Mammary epithelial cell (primary cell): ENCODE measurements at regions of chr12 and their contacts with region 1.

Region 1: GRCh38 chr12:65823513-65824375 is 539 bp upstream of the HMGA2 start:
- DNase-seq: peak; percentile 81
- H3K4me3 ChIP-seq: peak overlapping the region; percentile 70 to 85 (median 80)
- H3K27ac ChIP-seq: peak overlapping the region; percentile 97
- H3K4me1 ChIP-seq: peaks cover 32% of the 10 kb centered on the region
- H3K27me3 ChIP-seq: no peaks in the 10 kb centered on the region
- CTCF ChIP-seq: no peak

Region 2: GRCh38 chr12:65313719-65314317 is 509.9 kb before region 1 on chr12:
- CTCF ChIA-PET with region 1: no interaction called
- dilution Hi-C with region 1: no loop called
- in situ Hi-C with region 1: no loop called
- intact Hi-C with region 1: loop called (anchors 1 kb)
- DNase-seq: peak; percentile 19
- H3K4me3 ChIP-seq: no peak overlapping the region
- H3K27ac ChIP-seq: peak overlapping the region; percentile 2
- H3K4me1 ChIP-seq: peaks cover 3% of the 10 kb centered on the region
- H3K27me3 ChIP-seq: no peaks in the 10 kb centered on the region
- CTCF ChIP-seq: peak; percentile 59 to 67

Region 3: DNA sequence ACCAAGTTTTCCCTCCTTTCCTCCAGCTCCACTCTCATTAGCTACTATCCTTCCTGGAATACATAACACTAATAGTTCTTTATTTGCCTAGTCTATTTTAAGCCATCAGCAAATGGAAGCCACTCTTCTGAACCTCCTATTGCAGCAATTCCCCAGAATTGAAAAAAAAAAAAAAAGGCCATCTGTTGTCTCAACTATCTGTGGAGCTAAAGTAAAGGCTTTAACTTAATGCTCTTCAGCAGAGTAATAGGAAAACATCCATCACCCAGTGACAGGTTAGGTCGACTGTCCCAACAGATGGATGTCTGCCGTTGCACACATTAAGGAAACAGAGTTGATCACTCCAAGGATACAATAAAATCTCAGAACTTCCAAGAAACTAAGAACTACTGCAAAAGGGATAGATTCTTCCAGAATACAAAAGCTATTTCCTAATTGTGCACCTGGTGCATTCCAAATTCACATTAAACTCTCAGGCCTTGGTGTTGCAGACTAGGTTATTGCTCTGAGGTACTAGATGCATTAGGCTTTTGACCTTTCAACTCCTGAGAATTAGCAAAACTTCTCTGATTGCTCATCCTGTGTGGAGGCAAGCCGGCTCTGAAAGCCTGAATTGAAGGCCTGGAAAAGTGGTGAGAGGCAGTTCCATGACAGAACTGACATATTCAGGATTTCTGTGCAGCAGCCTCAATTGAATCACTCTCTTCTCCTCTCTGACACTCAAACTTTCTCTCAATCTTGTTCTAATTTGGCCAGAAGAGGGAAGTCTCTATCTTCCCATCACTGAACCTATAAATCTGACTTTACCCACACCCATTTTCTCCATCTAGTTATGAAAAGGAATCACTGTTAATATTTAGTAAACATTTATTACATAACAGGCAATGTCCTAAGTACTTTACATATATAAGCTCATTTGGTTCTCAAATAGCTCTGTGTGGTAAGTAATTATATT is 237.8 kb before region 1 on chr12:
- CTCF ChIA-PET with region 1: no interaction called
- dilution Hi-C with region 1: no loop called
- in situ Hi-C with region 1: loop called in 1 of 2 experiments (anchors 25 kb)
- intact Hi-C with region 1: no loop called
- DNase-seq: no peak
- H3K4me3 ChIP-seq: no peak overlapping the region
- H3K27ac ChIP-seq: no peak overlapping the region
- H3K4me1 ChIP-seq: peaks cover 9% of the 10 kb centered on the region
- H3K27me3 ChIP-seq: no peaks in the 10 kb centered on the region
- CTCF ChIP-seq: no peak

Region 4: DNA sequence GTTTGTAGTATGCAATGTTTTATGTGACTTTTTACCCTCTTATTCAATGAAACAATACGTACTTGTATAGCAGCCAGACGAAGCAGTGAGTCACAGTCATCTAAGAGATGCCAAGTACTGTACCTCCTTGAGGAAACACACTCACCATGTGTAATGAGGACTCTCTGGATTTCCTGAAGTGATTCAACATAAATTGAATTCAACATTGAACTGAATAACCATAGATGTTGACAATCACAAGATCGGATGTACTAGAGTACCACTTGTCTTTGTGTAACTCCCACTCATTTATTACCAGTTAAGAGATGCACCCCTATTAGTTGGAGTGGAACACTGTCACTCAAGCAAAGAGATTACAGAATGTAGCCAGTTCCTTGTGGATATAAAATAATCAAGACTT is 174.6 kb before region 1 on chr12:
- CTCF ChIA-PET with region 1: no interaction called
- dilution Hi-C with region 1: no loop called
- in situ Hi-C with region 1: no loop called
- intact Hi-C with region 1: no loop called
- DNase-seq: peak; percentile 99
- H3K4me3 ChIP-seq: no peak overlapping the region
- H3K27ac ChIP-seq: peak overlapping the region; percentile 93
- H3K4me1 ChIP-seq: peaks cover 31% of the 10 kb centered on the region
- H3K27me3 ChIP-seq: no peaks in the 10 kb centered on the region
- CTCF ChIP-seq: no peak

Region 5: GRCh38 chr12:65695113-65695865 is 128.5 kb before region 1 on chr12:
- CTCF ChIA-PET with region 1: no interaction called
- dilution Hi-C with region 1: no loop called
- in situ Hi-C with region 1: no loop called
- intact Hi-C with region 1: loop called (anchors 2 kb)
- DNase-seq: peak; percentile 98
- H3K4me3 ChIP-seq: no peak overlapping the region
- H3K27ac ChIP-seq: peak overlapping the region; percentile 67
- H3K4me1 ChIP-seq: peaks cover 28% of the 10 kb centered on the region
- H3K27me3 ChIP-seq: no peaks in the 10 kb centered on the region
- CTCF ChIP-seq: no peak

Region 6: GRCh38 chr12:65765436-65765813 is 58.3 kb before region 1 on chr12:
- CTCF ChIA-PET with region 1: no interaction called
- dilution Hi-C with region 1: no loop called
- in situ Hi-C with region 1: no loop called
- intact Hi-C with region 1: loop called (anchors 1 kb)
- DNase-seq: peak; percentile 91
- H3K4me3 ChIP-seq: peak overlapping the region in 2 of 3 experiments; percentile 7 to 19
- H3K27ac ChIP-seq: peak overlapping the region; percentile 96
- H3K4me1 ChIP-seq: peaks cover 39% of the 10 kb centered on the region
- H3K27me3 ChIP-seq: no peaks in the 10 kb centered on the region
- CTCF ChIP-seq: no peak

Region 7: GRCh38 chr12:65948320-65949008 is 124.7 kb after region 1 on chr12:
- CTCF ChIA-PET with region 1: no interaction called
- dilution Hi-C with region 1: no loop called
- in situ Hi-C with region 1: no loop called
- intact Hi-C with region 1: no loop called
- DNase-seq: peak; percentile 94
- H3K4me3 ChIP-seq: no peak overlapping the region
- H3K27ac ChIP-seq: peak overlapping the region; percentile 85
- H3K4me1 ChIP-seq: peaks cover 80% of the 10 kb centered on the region
- H3K27me3 ChIP-seq: no peaks in the 10 kb centered on the region
- CTCF ChIP-seq: no peak

Region 8: DNA sequence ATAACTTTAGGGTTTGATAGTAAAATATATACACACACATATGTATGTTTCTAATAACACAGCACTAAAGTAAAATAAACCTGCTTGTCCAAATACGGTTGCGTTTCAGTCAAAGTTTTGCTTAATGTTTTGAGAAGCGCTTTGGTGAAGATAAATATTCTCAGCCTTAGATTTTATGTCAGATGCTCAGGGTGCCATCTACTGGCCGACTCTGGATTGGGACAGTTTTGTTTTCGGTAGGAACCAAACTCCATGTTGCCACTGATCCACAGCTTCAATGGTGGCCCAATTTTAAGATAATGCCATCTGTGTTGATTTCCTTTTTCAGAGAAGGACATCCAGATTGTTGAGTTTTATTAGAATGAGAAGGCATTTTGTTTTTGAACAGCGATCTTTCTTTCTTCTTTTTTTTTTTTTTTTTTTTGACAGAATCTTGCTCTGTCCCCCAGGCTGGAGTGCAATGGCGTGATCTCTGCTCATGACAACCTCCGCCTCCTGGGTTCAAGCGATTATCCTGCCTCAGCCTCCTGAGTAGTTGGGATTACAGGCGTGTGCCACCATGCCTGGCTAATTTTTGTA is 263.7 kb after region 1 on chr12:
- CTCF ChIA-PET with region 1: no interaction called
- dilution Hi-C with region 1: no loop called
- in situ Hi-C with region 1: loop called in 1 of 2 experiments (anchors 25 kb)
- intact Hi-C with region 1: no loop called
- DNase-seq: peak; percentile 54
- H3K4me3 ChIP-seq: no peak overlapping the region
- H3K27ac ChIP-seq: no peak overlapping the region
- H3K4me1 ChIP-seq: no peaks in the 10 kb centered on the region
- H3K27me3 ChIP-seq: no peaks in the 10 kb centered on the region
- CTCF ChIP-seq: peak; percentile 88